IMR-90 (cell line): ENCODE measurements at regions of chr13 and their contacts with region 1.

Region 1: DNA sequence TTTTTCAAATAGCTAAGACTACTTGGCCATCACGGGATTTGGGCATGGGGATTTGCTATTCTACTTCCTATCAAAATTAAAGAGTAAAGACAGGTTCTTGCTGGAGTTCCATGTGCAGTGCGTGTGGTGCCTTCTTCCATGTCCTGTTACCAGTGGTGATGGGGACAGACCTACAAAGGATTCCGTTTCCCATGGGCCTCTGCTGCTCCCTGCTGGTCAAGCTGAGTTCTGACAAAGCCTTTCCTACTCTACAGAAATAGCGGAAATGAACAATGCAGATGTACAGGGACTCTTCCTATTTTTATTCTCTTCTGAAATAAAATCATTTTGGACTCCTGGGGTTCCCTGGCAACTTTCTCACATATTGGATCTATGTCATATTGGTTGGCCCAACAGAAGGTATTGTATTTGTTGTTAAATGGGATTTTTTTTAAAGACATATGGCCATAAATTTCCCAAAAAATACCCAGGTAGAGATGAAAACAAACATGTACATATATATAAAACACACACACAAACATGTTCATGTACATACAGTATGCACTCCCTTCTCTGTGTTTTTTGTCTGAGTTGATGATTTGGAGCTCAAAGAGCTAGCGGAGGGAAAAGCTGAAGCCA is 90.5 kb upstream of the SLC15A1 start:
- DNase-seq: peak; percentile 80
- ATAC-seq: peak; percentile 89
- H3K4me3 ChIP-seq: no peak overlapping the region
- H3K27ac ChIP-seq: no peak overlapping the region
- H3K4me1 ChIP-seq: peaks cover 4% of the 10 kb centered on the region; the same call in 1 of the 2 replicates
- H3K27me3 ChIP-seq: no peaks in the 10 kb centered on the region
- CTCF ChIP-seq: peak; percentile 88
- POLR2A ChIP-seq: no peak
- RAD21 ChIP-seq: peak; percentile 89

Region 2: DNA sequence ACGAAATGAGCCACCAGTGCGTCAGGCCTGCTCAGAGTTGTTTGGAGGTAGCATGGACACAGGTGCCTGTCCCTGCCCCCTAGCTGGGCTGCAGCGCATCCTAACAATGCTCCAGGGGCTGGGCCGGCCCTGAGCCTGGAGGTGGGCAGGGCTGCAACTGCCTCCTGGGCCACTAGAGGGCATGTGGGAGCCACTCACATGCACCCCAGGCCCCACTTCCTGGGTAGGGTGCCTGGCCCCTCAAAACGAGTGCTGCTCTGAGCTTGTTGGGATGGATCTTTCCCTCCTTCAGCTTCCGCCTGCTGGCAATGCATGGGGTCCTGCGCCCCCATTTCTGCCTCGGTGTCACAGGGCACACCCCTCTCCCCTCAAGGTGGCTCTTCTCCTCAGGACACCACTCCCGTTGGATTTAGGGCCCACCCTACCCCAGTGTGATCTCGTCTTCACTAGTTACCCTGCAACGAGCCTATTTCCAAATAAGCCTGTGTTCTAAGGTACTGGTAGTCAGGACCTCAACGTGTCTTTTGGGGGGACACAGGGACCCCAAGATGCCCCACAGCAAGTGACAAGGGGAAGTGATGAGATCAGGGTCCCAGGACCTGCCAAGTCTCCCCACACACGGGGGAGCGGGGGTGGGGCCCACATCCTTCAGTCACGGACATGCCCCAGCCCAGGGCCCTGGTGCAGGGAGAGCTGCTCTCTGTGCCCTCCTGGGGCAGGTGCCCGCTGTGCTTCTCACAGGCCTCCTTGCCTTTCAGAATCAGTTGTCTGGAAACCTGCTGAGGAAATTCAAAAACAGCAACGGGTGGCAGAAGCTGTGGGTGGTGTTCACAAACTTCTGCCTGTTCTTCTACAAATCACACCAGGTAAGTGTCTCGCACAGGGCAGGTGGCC is 397.4 kb before region 1 on chr13:
- CTCF ChIA-PET with region 1: no interaction called
- POLR2A ChIA-PET with region 1: no interaction called
- dilution Hi-C with region 1: no loop called
- in situ Hi-C with region 1: loop called (anchors 10 kb)
- intact Hi-C with region 1: loop called (anchors 2 kb)
- DNase-seq: peak; percentile 41
- ATAC-seq: peak; percentile 82
- H3K4me3 ChIP-seq: no peak overlapping the region
- H3K27ac ChIP-seq: no peak overlapping the region
- H3K4me1 ChIP-seq: peaks cover 13% of the 10 kb centered on the region
- H3K27me3 ChIP-seq: no peaks in the 10 kb centered on the region
- CTCF ChIP-seq: peak; percentile 84
- POLR2A ChIP-seq: no peak
- RAD21 ChIP-seq: peak; percentile 86

Region 3: DNA sequence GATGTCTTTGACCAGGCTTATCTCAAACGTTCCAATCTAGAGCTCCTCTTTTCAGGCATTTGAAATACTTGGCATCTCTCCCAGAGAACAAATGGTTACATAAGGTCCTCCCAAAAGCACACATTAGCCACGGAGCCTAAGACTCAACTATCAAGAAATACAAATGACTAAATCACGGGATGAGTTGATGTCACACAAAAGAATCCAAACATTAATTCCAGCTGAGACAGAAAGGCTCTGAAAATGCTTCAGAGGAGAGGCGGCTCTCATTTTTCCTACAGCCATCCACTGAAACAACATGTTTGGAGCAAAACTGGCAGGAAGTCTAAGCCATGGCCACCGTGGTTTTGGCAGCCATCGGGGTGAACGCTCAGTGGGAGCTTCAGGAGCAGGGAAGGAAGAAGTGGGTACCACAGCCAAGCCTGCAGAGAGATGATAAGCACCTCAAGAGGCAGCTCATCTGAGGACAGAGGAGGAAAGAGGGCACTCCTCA is 388.5 kb before region 1 on chr13:
- CTCF ChIA-PET with region 1: no interaction called
- POLR2A ChIA-PET with region 1: no interaction called
- dilution Hi-C with region 1: no loop called
- in situ Hi-C with region 1: loop called (anchors 10 kb)
- intact Hi-C with region 1: no loop called
- DNase-seq: peak; percentile 94
- ATAC-seq: peak; percentile 75
- H3K4me3 ChIP-seq: no peak overlapping the region
- H3K27ac ChIP-seq: peak overlapping the region; percentile 91
- H3K4me1 ChIP-seq: peaks cover 14% of the 10 kb centered on the region
- H3K27me3 ChIP-seq: no peaks in the 10 kb centered on the region
- CTCF ChIP-seq: no peak
- POLR2A ChIP-seq: no peak
- RAD21 ChIP-seq: no peak

Region 4: GRCh38 chr13:98672944-98673545 is 169.9 kb before region 1 on chr13:
- CTCF ChIA-PET with region 1: no interaction called
- POLR2A ChIA-PET with region 1: no interaction called
- dilution Hi-C with region 1: no loop called
- in situ Hi-C with region 1: no loop called
- intact Hi-C with region 1: loop called (anchors 1 kb)
- DNase-seq: peak; percentile 75
- ATAC-seq: peak; percentile 82
- H3K4me3 ChIP-seq: no peak overlapping the region
- H3K27ac ChIP-seq: no peak overlapping the region
- H3K4me1 ChIP-seq: peaks cover 6% of the 10 kb centered on the region; the same call in 1 of the 2 replicates
- H3K27me3 ChIP-seq: peaks cover 16% of the 10 kb centered on the region
- CTCF ChIP-seq: peak; percentile 85
- POLR2A ChIP-seq: no peak
- RAD21 ChIP-seq: peak; percentile 82

Region 5: DNA sequence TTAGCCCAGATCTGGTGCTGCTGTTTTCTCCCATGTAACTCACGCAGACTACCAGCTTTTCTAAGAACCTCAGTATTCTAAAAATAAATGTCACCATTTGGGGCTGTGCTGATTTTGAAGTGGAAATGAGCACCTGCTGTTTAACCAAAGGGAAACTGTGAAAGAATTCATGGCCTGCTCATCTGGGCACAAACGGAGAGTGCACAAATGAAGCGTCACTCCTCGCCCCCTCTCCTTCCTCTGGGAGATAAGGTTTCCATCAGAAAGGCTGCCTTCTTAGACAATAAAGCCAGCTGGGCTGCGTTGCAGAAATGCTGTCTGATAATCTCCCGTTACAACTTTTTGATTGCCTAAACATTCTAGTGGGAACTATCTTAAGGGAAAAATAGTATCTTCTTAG is 16.8 kb before region 1 on chr13:
- CTCF ChIA-PET with region 1: interaction called, 17 read pairs
- POLR2A ChIA-PET with region 1: no interaction called
- dilution Hi-C with region 1: no loop called
- in situ Hi-C with region 1: no loop called
- intact Hi-C with region 1: no loop called
- DNase-seq: peak; percentile 15
- ATAC-seq: no peak
- H3K4me3 ChIP-seq: no peak overlapping the region
- H3K27ac ChIP-seq: no peak overlapping the region
- H3K4me1 ChIP-seq: peaks cover 2% of the 10 kb centered on the region; the same call in 1 of the 2 replicates
- H3K27me3 ChIP-seq: no peaks in the 10 kb centered on the region
- CTCF ChIP-seq: no peak
- POLR2A ChIP-seq: no peak
- RAD21 ChIP-seq: no peak

Region 6: DNA sequence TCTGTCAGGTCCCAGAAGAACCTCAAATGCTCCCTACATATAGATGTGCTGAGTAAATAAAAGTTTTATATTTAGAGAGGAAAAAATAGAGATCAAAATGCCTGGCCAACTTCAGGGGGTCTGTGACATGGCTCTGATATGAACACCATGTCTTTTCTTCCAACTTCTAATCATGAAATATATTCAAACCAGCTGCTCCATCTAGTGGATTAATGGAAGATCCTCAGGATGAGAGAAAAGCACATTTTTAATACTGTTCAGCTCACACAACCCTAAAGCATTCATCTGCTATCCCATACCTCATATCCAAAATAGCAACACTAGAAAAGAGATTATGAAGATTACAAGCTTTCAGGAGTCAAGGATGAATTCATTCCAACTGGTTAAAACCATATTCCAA is 190.8 kb after region 1 on chr13:
- CTCF ChIA-PET with region 1: interaction called, 8 read pairs
- POLR2A ChIA-PET with region 1: no interaction called
- dilution Hi-C with region 1: no loop called
- in situ Hi-C with region 1: no loop called
- intact Hi-C with region 1: loop called (anchors 1 kb)
- DNase-seq: peak; percentile 28
- ATAC-seq: peak; percentile 80
- H3K4me3 ChIP-seq: no peak overlapping the region
- H3K27ac ChIP-seq: no peak overlapping the region
- H3K4me1 ChIP-seq: no peaks in the 10 kb centered on the region
- H3K27me3 ChIP-seq: no peaks in the 10 kb centered on the region
- CTCF ChIP-seq: peak; percentile 65
- POLR2A ChIP-seq: no peak
- RAD21 ChIP-seq: peak; percentile 59

Region 7: DNA sequence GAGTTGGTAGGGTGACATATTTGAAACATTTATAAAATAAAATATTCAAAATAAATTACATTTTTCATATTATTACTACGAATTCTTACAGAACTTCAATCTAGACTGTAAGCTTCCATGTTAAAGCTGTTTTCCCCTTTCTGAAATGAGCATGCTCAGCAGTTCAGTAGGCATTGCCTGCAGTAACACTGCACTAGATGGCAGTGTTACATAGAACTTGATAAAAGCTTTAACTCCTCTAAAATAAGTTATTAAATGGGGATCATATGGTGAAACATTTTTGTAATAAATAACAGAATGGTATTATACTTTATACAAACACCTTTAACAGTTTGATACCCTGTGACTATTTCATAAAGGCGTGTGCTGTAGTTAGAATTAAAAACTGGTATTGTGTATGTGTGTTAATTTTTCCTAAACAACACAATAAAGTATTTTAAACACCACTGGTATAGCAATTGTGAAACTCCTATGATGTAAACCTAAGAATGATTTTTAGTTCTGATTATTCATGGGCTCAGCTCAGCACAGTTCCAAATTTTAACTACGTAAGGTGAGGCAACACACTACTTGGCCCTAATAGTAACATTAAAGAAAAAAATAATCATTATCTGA is 426.8 kb after region 1 on chr13:
- CTCF ChIA-PET with region 1: no interaction called
- POLR2A ChIA-PET with region 1: no interaction called
- dilution Hi-C with region 1: no loop called
- in situ Hi-C with region 1: no loop called
- intact Hi-C with region 1: loop called (anchors 10 kb)
- DNase-seq: peak; percentile 78
- ATAC-seq: peak; percentile 94
- H3K4me3 ChIP-seq: no peak overlapping the region
- H3K27ac ChIP-seq: no peak overlapping the region
- H3K4me1 ChIP-seq: no peaks in the 10 kb centered on the region
- H3K27me3 ChIP-seq: no peaks in the 10 kb centered on the region
- CTCF ChIP-seq: peak; percentile 93
- POLR2A ChIP-seq: no peak
- RAD21 ChIP-seq: peak; percentile 89